ENCODE measurements at regions of chr10 and their contacts with region 1.

Region 1: DNA sequence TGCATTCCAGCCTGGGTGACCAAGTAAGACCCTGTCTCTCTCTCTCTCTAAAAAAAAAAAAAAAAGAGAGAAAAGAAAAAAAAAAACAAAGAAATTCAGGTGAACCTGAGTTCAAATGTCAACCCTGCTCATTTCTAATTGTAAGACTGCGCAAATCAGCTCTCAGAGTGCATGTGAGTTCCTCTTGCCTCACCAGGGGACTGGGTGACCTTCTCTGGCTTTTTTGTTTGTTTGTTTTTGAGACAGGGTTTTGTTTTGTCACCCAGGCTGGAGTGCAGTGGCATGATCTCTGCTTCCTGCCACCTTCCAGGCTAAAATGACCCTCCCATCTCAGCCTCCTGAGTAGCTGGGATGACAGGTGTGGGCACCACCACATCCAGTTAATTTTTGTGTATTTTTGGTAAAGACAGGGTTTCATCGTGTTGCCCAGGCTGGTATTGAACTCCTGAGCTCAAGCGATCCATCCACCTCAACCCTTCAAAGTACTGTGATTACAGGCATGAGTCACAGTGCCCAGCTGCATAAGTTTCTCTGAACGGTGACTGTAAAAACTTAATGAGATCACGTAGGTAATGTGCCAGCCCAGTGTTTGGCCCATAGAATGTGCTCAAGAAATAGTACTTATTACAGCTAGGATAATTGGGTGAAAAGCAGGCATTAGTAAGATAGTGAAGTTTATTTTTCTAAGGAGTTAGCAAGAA is 45.3 kb upstream of the BAMBI start:
- DNase-seq: no peak
- H3K4me3 ChIP-seq: no peak overlapping the region
- H3K4me1 ChIP-seq: peaks cover 3% of the 10 kb centered on the region
- H3K27me3 ChIP-seq: no peaks in the 10 kb centered on the region; the same call in 1 of the 2 replicates

Region 2: GRCh38 chr10:28959850-28960501 is 327.9 kb after region 1 on chr10:
- in situ Hi-C with region 1: no loop called
- DNase-seq: no peak
- H3K4me3 ChIP-seq: no peak overlapping the region
- H3K4me1 ChIP-seq: no peaks in the 10 kb centered on the region
- H3K27me3 ChIP-seq: no peaks in the 10 kb centered on the region

Region 3: GRCh38 chr10:29297678-29298077 is 665.6 kb after region 1 on chr10:
- in situ Hi-C with region 1: loop called (anchors 10 kb)
- DNase-seq: no peak
- H3K4me3 ChIP-seq: no peak overlapping the region
- H3K4me1 ChIP-seq: no peaks in the 10 kb centered on the region
- H3K27me3 ChIP-seq: no peaks in the 10 kb centered on the region

Region 4: GRCh38 chr10:30118590-30118989 is 1486.5 kb after region 1 on chr10:
- in situ Hi-C with region 1: no loop called
- DNase-seq: no peak
- H3K4me3 ChIP-seq: no peak overlapping the region
- H3K4me1 ChIP-seq: peaks cover 12% of the 10 kb centered on the region
- H3K27me3 ChIP-seq: no peaks in the 10 kb centered on the region

Measured in HAP-1 (cell line).